ENCODE measurements at regions of chr2 and their contacts with region 1.

Region 1: GRCh38 chr2:164992818-164993217 is 37.5 kb upstream of the SLC38A11 start:
- DNase-seq: peak; percentile 87
- H3K4me3 ChIP-seq: no peak overlapping the region
- H3K27ac ChIP-seq: peak overlapping the region; percentile 91
- H3K4me1 ChIP-seq: peaks cover 31% of the 10 kb centered on the region
- H3K27me3 ChIP-seq: no peaks in the 10 kb centered on the region
- CTCF ChIP-seq: peak; percentile 21 to 39

Region 2: GRCh38 chr2:164841719-164842623 is 150.8 kb before region 1 on chr2 and contains the start of gene COBLL1:
- CTCF ChIA-PET with region 1: no interaction called
- dilution Hi-C with region 1: loop called (anchors 25 kb)
- in situ Hi-C with region 1: no loop called
- intact Hi-C with region 1: loop called (anchors 1 kb)
- DNase-seq: peak; percentile 87
- H3K4me3 ChIP-seq: peak within 1 kb of the TSS; percentile 82 to 87 (median 83)
- H3K27ac ChIP-seq: peak within 1 kb of the TSS; percentile 82
- H3K4me1 ChIP-seq: peaks cover 20% of the 10 kb centered on the region
- H3K27me3 ChIP-seq: no peaks in the 10 kb centered on the region
- CTCF ChIP-seq: peak; percentile 61 to 91
- total RNA-seq, gene COBLL1: 35.0 to 53.7 TPM

Region 3: GRCh38 chr2:165008730-165009315 is 16.0 kb after region 1 on chr2:
- CTCF ChIA-PET with region 1: interaction called, 11 read pairs
- dilution Hi-C with region 1: no loop called
- in situ Hi-C with region 1: no loop called
- intact Hi-C with region 1: loop called (anchors 2 kb)
- DNase-seq: peak; percentile 98
- H3K4me3 ChIP-seq: peak overlapping the region in 2 of 3 experiments; percentile 7 to 12
- H3K27ac ChIP-seq: peak overlapping the region; percentile 96
- H3K4me1 ChIP-seq: peaks cover 40% of the 10 kb centered on the region
- H3K27me3 ChIP-seq: no peaks in the 10 kb centered on the region
- CTCF ChIP-seq: no peak

Region 4: DNA sequence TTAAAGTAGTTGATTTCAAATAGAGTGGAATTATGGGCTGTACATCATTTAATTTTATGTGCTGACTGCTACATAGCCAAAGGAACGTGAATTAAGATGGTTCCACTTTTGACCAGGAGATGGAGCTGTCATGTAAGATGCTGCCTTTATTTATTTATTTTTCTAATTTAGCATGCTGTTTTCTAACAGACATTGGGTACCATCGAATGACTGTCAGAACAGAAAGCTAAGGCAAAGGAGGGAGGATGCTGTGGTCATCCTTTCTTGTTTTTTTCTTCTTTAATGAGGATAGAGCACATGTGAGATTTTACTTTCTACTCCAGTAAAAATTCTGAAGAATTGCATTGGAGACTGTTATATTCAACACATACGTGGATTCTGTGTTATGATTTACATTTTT is 246.4 kb after region 1 on chr2 and contains the start of gene SCN2A:
- CTCF ChIA-PET with region 1: no interaction called
- dilution Hi-C with region 1: no loop called
- in situ Hi-C with region 1: no loop called
- intact Hi-C with region 1: loop called (anchors 1 kb)
- DNase-seq: peak; percentile 35
- H3K4me3 ChIP-seq: no peak within 1 kb of the TSS
- H3K27ac ChIP-seq: no peak within 1 kb of the TSS
- H3K4me1 ChIP-seq: no peaks in the 10 kb centered on the region
- H3K27me3 ChIP-seq: no peaks in the 10 kb centered on the region
- CTCF ChIP-seq: peak; percentile 74 to 75
- total RNA-seq, gene SCN2A: 2.8 to 7.0 TPM

Region 5: DNA sequence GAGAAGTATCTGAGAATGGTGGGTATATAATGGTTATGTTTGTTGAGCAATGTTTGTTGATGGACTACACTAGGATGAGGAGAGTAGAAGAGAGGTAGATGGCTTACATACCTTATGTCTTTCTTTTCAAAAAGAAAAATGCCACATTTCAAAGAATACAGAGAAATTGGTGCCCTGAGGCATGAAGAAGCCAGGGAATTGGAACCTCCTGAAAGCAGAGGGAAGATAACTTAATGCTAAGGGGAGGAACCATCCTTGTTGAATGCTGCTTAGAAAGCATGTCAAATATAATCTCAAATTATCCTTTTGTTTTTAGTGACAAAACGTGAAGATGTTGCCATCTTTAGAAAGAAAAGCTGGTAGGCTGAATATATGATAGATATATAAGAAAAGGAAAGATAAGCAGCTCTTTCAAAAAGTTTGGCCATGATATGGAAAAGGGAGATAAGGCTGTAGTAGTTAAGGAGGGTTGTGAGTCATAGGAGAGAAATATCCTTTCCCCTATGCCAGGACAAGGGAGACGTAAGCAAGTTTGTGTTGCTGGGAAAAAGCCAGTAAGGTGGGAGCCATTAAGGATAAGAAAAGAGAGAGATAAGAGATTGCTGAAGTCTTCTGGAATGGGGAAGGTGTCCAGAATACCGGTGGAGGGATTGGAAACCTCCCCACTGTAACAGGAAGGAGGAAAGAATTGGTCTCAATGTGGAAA is 312.7 kb after region 1 on chr2:
- CTCF ChIA-PET with region 1: interaction called, 3 read pairs
- dilution Hi-C with region 1: no loop called
- in situ Hi-C with region 1: no loop called
- intact Hi-C with region 1: loop called (anchors 2 kb)
- DNase-seq: no peak
- H3K4me3 ChIP-seq: no peak overlapping the region
- H3K27ac ChIP-seq: no peak overlapping the region
- H3K4me1 ChIP-seq: no peaks in the 10 kb centered on the region
- H3K27me3 ChIP-seq: no peaks in the 10 kb centered on the region
- CTCF ChIP-seq: no peak

Measured in mammary epithelial cell (primary cell).